Activated T-helper 1 cell treated with anti-CD3 and anti-CD28 coated beads, Interleukin-12 subunit alpha, Interleukin-12 subunit beta, Interleukin-2, Interleukin-4 antibody, amounts not matched to agents 30 ng/mL and 10 ng/mL and 1 ng/mL, durations not matched to agents 14 hours and 24 hours and 36 hours (primary cell): ENCODE measurements at regions of chr2 and their contacts with region 1.

Region 1: GRCh38 chr2:189096769-189097447 is 82.7 kb downstream of the COL5A2 start:
- DNase-seq: no peak
- H3K4me3 Mint-ChIP-seq: no peak overlapping the region
- H3K27ac Mint-ChIP-seq: no peak overlapping the region
- H3K4me1 Mint-ChIP-seq: no peaks in the 10 kb centered on the region
- H3K27me3 Mint-ChIP-seq: no peaks in the 10 kb centered on the region

Region 2: DNA sequence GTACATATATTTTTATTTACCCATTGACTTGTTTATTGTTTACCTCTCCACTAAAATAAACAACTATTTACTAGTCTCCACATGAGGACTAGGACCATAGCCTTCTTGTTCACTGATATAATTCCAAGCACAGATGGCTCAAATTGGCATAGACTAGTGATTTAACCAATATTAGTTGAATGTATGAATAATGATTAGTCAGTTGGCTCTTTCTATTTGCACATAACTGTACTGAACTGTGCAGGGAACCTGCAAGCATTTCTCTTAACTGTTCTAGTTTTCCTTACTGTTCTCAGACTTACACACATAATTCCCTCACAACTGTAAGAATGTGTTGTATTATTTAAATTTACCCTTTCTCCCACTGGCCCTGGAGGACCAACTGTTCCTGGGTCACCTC is 30.9 kb before region 1 on chr2:
- intact Hi-C with region 1: no loop called
- DNase-seq: no peak
- H3K4me3 Mint-ChIP-seq: no peak overlapping the region
- H3K27ac Mint-ChIP-seq: no peak overlapping the region
- H3K4me1 Mint-ChIP-seq: no peaks in the 10 kb centered on the region
- H3K27me3 Mint-ChIP-seq: peaks cover 1% of the 10 kb centered on the region

Region 3: DNA sequence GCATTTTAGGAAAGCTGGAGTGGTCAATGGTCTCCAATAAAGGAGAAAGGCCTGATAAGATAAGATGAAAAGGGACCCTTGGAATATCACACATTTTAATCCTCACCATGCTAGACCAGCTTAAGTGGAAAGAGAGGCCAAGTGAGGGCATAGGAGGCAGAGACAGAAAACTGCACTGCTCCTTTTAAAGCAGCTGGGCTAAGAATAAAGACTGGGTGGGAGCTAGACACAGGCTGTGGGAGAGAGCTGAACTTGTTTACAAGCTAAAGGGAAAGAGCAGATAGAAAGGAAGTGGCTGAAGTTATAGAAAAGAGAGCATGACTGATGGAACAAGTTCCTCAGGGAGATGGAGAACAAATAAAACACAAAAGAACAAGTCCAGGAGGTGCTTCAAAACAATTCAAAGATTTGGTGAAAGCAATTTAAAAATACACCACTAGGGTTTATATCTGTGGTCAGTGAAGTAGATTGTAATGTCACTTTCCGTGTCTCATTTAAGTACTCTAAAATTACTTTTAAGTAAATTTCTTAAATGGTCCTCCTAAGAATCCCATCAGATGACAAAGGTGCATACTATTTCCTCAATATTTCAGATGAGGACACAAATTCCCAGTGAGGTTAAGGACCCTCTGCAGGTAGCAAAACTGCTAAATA is 75.2 kb after region 1 on chr2:
- intact Hi-C with region 1: no loop called
- DNase-seq: no peak
- H3K4me3 Mint-ChIP-seq: no peak overlapping the region
- H3K27ac Mint-ChIP-seq: no peak overlapping the region
- H3K4me1 Mint-ChIP-seq: no peaks in the 10 kb centered on the region
- H3K27me3 Mint-ChIP-seq: no peaks in the 10 kb centered on the region

Region 4: DNA sequence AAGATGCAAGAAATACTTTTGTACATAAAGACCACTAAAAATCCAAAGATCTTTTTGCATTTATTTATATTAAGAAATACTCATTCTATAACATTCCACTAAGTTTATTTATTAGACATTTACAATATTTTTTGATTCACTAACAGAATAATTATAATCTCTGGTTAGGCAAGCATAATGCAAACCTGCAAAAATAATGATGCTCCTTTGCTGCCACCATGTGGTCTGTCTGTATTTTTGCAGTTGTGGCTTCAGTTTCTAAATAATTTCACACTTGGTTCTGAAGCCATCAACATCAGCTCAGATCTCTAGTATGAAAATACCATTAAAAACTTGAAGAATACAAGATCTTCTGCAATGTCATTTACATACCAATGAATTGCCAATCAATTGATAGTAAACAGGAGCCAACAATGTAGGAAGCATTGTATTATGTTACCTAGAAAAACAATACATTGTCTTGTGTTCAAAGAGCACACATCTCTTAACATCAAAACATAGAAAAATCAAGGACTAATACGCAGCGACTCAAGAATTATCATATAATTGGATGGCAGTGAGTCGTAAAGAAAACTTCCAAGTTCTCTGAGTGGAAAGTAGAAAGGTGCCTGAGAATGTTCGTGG is 315.5 kb after region 1 on chr2:
- intact Hi-C with region 1: loop called (anchors 1 kb)
- DNase-seq: peak; percentile 14
- H3K4me3 Mint-ChIP-seq: no peak overlapping the region
- H3K27ac Mint-ChIP-seq: no peak overlapping the region
- H3K4me1 Mint-ChIP-seq: peaks cover 9% of the 10 kb centered on the region
- H3K27me3 Mint-ChIP-seq: no peaks in the 10 kb centered on the region